ENCODE measurements at regions of chr20 and their contacts with region 1.

Region 1: DNA sequence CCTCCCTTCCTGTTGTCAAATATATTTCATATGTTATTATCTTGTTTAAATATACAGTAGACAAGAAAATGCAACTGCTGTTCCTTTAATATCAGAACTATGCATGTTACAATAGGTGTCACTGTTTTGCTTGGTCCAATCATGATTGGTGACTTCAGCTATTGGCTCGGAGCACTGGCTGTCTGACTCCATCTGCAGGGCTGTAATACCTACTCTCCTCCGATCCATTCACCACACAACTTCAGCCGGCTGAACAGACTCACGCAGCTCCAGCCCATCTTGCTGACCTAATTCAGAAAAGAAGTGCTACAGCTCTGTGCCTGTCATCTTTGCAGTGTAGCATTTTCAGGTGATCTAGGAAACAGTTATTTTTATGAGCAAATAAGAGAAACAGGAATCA is at the start of gene BTBD3:
- DNase-seq: peak; percentile 86
- H3K4me3 ChIP-seq: peak within 1 kb of the TSS in 1 of 3 experiments; percentile 31
- H3K27ac ChIP-seq: no peak within 1 kb of the TSS
- H3K4me1 ChIP-seq: peaks cover 3% of the 10 kb centered on the region
- H3K27me3 ChIP-seq: no peaks in the 10 kb centered on the region
- CTCF ChIP-seq: peak in 1 of 2 donors; percentile 3
- POLR2A ChIP-seq: peak; percentile 17
- total RNA-seq, gene BTBD3: 29.3 and 30.1 TPM in 2 replicates

Region 2: DNA sequence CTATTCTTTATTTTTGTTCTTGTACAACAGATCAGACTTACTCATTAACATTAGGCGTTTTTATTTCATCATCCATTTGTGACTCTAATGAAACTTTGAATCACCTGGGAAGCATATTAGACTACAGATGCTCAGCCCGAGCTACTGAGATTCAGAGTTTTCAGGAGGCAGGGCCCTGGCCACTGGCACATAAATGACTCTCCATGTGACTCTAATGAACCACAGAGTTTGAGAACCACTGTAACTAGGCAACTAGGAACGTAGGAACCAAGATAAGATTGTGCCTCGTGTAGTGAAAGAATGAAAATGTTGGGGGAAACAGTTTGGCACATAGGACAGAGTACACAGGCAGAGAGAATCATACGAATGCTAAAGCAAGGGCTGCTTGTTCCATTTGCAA is 405.8 kb before region 1 on chr20:
- CTCF ChIA-PET with region 1: no interaction called
- POLR2A ChIA-PET with region 1: no interaction called
- dilution Hi-C with region 1: no loop called
- intact Hi-C with region 1: no loop called
- DNase-seq: no peak
- H3K4me3 ChIP-seq: no peak overlapping the region
- H3K27ac ChIP-seq: no peak overlapping the region
- H3K4me1 ChIP-seq: no peaks in the 10 kb centered on the region
- H3K27me3 ChIP-seq: no peaks in the 10 kb centered on the region
- CTCF ChIP-seq: no peak
- POLR2A ChIP-seq: no peak

Region 3: GRCh38 chr20:11935212-11936154 is 17.8 kb after region 1 on chr20:
- CTCF ChIA-PET with region 1: no interaction called
- POLR2A ChIA-PET with region 1: no interaction called
- dilution Hi-C with region 1: no loop called
- intact Hi-C with region 1: loop called (anchors 1 kb)
- DNase-seq: no peak
- H3K4me3 ChIP-seq: no peak overlapping the region
- H3K27ac ChIP-seq: no peak overlapping the region
- H3K4me1 ChIP-seq: no peaks in the 10 kb centered on the region
- H3K27me3 ChIP-seq: no peaks in the 10 kb centered on the region
- CTCF ChIP-seq: no peak
- POLR2A ChIP-seq: no peak

Measured in endothelial cell of umbilical vein (primary cell).